Psoas muscle (tissue), 8 donors: ENCODE measurements at regions of chr1 and their contacts with region 1.

Region 1: GRCh38 chr1:61198554-61198953 is 116.2 kb downstream of the NFIA start:
- DNase-seq: no peak
- ATAC-seq: peak in 2 of 4 donors; percentile 45 to 77
- H3K4me3 ChIP-seq: no peak overlapping the region
- H3K27ac ChIP-seq: no peak overlapping the region
- H3K4me1 ChIP-seq: peaks cover 30% of the 10 kb centered on the region
- H3K27me3 ChIP-seq: no peaks in the 10 kb centered on the region
- CTCF ChIP-seq: no peak

Region 2: DNA sequence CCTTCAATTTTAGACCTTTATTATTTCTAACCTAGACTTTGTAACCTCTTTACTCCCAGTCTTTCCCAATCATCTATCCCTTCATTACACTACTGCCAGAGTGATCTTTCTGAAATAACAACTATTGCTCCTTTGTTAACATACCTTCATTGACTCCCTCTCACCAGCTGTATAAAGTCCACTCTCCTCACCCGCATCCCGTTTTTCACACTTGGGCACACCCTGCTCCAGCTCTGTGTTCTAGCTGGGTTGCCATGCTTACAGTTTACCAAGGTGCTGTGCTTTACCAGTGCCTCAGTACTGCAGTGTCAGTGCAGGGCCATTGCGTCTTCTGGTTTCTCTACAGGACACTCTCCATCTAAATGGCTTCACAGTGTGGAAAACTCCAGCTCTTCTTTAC is 32.0 kb after region 1 on chr1:
- intact Hi-C with region 1: loop called (anchors 5 kb)
- DNase-seq: no peak
- ATAC-seq: no peak
- H3K4me3 ChIP-seq: no peak overlapping the region
- H3K27ac ChIP-seq: no peak overlapping the region
- H3K4me1 ChIP-seq: peaks cover 12% of the 10 kb centered on the region
- H3K27me3 ChIP-seq: no peaks in the 10 kb centered on the region
- CTCF ChIP-seq: no peak